HepG2 (cell line): ENCODE measurements at regions of chr18 and their contacts with region 1.

Region 1: DNA sequence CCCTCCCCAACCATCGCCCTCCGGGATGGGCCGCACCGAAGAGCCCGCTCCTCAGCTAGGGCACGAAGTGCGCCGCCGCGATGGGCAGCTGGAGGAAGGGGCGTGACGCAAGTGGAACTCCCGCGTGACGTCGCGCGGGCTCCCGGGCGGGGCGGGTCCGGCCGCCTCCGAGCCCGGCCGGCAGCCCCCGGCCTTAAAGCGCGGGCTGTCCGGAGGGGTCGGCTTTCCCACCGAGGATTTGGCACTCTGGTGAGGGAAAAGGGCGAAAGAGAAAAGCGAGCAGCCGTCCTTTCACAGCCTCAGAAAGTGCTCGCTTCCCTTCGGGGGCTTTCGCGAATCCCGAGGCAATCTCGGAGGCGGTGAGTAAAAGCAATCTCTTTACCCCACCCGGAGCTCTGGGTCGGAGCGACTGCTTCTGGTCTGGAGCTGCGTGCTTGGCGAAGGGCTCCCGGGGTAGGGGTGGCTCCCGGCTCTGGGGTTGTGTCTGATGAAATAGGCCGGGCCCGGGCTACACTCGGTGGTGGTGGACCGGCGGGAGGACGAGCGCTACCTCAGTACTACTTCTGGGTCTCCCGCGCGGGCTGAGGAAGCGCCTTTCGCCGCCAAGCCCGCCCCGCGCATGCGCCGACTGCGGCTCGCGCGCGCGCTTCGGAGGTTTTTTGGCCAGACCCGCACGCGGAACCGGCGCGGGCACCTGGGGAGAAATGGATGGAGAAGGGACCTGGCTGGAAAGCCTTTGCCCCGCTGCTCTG is at the start of gene RBBP8:
- DNase-seq: peak; percentile 73
- ATAC-seq: peak; percentile 94
- H3K4me3 ChIP-seq: peak within 1 kb of the TSS; percentile 80 to 90 (median 88)
- H3K27ac ChIP-seq: peak within 1 kb of the TSS; percentile 92
- H3K4me1 ChIP-seq: peaks cover 39% of the 10 kb centered on the region
- H3K27me3 ChIP-seq: no peaks in the 10 kb centered on the region
- CTCF ChIP-seq: 0 out of 2 replicates have a peak, but pooled peaks have one; percentile 20
- EP300 ChIP-seq: no peak
- POLR2A ChIP-seq: peak; percentile 72 to 83
- RAD21 ChIP-seq: no peak; the same call in 1 of the 2 replicates
- total RNA-seq, gene RBBP8: 47.4 and 68.5 TPM in 2 replicates

Region 2: DNA sequence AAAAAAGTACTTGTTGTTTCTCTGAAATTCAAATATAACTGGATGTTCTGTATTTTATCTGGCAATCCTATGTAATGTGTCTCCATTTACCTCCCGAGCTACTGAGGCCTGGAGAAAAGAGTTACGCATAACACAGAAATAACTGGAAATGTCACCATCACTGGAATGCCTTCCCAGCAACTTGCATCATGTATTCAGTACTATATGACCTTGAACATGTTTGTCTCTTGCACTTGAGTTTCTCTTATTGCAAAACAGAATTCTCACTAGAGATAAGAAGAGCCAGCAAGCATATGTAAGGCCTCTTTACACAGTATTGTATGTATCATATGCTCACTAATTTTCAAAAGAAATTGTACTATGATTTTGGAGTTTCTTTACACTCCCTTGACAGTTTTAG is 416.0 kb before region 1 on chr18:
- CTCF ChIA-PET with region 1: no interaction called
- POLR2A ChIA-PET with region 1: no interaction called
- in situ Hi-C with region 1: no loop called
- intact Hi-C with region 1: no loop called
- DNase-seq: no peak
- ATAC-seq: no peak
- H3K4me3 ChIP-seq: no peak overlapping the region
- H3K27ac ChIP-seq: no peak overlapping the region
- H3K4me1 ChIP-seq: no peaks in the 10 kb centered on the region
- H3K27me3 ChIP-seq: no peaks in the 10 kb centered on the region; a peak in 1 of 5 replicates
- CTCF ChIP-seq: no peak
- EP300 ChIP-seq: no peak
- POLR2A ChIP-seq: no peak
- RAD21 ChIP-seq: no peak

Region 3: GRCh38 chr18:22946846-22947245 is 13.5 kb after region 1 on chr18:
- CTCF ChIA-PET with region 1: no interaction called
- POLR2A ChIA-PET with region 1: no interaction called
- in situ Hi-C with region 1: no loop called
- intact Hi-C with region 1: loop called (anchors 1 kb)
- DNase-seq: no peak
- ATAC-seq: no peak
- H3K4me3 ChIP-seq: no peak overlapping the region
- H3K27ac ChIP-seq: no peak overlapping the region
- H3K4me1 ChIP-seq: no peaks in the 10 kb centered on the region
- H3K27me3 ChIP-seq: no peaks in the 10 kb centered on the region
- CTCF ChIP-seq: no peak
- EP300 ChIP-seq: no peak
- POLR2A ChIP-seq: no peak
- RAD21 ChIP-seq: no peak

Region 4: GRCh38 chr18:23442655-23443357 is 509.4 kb after region 1 on chr18:
- CTCF ChIA-PET with region 1: no interaction called
- POLR2A ChIA-PET with region 1: no interaction called
- in situ Hi-C with region 1: no loop called
- intact Hi-C with region 1: no loop called
- DNase-seq: no peak
- ATAC-seq: no peak
- H3K4me3 ChIP-seq: no peak overlapping the region
- H3K27ac ChIP-seq: no peak overlapping the region
- H3K4me1 ChIP-seq: peaks cover 12% of the 10 kb centered on the region
- H3K27me3 ChIP-seq: peaks cover 0 to 7% of the 10 kb centered on the region in 2 experiments; a peak in 1 of 5 replicates
- CTCF ChIP-seq: no peak
- EP300 ChIP-seq: no peak
- POLR2A ChIP-seq: no peak
- RAD21 ChIP-seq: no peak